Posterior vena cava (tissue), 2 donors: ENCODE measurements at regions of chr2 and their contacts with region 1.

Region 1: DNA sequence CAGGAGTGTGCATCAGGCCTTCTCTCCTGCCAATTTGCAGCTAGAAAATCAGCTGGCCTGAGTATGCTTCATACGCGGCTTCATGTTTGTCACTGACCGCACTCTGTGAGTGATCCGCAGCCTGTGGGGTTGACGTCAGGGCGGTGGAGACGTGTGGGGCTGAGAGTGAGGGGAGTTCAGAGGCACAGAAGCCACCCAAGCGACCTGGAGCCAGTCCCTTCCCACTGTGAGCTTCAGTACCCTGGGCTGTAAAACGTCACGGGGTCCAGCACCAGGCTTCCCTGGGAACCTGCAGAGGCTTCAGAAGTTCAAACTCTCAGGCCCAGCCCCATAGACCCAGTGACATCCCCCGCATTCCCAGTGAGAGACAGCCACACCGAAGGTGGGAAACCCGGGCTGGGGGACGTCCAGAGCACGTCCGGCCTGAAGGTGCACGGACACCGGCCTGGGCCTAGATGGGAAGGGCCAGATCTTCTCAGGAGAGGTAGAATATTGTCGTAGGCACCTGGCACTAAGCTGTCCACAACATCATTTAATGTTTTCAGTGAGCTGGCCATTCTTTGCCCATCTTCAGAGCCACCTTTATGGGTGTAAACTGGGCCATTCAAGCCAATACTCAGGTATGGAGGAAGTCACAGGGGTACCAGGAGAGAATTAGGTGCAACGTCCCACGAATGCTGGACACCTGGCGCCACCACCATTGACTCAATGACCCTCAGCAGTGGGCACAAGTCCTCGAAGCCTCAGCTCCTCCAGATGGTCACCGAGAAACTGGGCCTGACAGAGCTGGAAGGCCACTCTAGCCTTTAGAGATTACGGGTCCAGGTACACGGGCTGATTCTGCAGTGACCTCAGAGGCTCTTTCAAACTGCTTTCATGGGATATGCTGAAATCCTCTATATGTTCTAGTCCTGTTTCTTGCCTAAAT is 235.6 kb upstream of the MYT1L start:
- DNase-seq: peak; percentile 68

Region 2: DNA sequence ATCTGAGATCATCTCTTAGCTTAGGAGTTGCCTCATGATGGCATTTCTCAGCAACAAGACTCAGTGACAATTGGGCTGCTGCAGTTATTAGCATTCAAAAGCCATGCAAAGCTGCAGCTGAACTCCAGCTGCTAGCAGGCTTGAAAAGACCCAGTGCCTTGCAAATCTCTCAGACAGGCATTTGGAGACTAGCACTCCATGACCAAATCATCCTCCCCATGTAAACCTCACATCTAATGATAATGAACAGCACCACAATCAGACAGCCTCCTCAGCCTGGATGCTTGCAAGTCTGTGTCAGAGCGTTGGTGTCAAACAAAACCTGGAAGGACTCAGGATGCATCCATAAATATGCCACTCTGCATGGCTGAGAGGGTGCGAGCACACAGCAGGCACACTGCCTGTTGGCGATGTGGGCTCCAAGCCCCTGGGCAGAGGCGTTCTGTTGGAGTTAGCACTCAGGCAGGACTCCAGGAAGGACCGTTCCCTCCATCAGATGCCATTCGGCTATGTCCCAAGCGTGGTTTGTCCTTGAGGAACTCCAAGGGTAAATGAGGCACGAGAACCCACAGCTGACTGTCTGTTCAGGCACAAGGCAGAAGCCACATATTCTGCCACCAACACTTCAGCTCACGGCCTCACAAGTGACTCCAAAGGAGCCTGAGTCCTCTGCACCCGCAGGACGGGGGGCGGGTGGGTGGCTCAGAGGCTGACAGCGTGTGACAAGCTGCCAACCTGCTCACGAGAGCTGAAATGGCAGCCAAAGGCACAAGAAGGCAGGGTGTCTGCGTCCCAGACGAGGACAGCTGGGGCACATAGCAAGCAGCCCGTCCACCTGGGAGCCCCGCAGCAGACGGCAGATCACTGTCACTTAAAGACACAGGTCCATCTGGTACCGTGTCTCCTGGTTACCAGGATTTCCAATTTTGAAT is 419.4 kb before region 1 on chr2:
- intact Hi-C with region 1: no loop called
- DNase-seq: no peak

Region 3: DNA sequence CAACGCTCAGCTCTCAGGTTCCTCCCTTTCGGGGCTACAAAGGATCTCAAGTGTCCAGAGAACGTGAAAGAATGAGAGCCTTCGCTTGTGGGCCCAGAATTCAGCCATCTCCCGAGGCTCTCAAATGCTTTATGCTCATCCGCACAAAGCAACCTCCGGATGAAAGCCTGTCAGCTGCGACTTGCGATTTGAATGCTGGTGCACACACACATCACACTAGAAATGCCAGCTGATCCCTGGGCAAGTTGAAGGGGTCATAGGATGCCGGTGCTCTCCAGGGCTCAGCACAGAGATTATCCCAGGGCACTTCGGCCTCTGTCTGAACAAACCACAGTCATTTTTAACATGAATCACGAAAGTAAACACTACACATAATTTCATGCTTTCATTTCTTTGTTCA is 93.8 kb before region 1 on chr2:
- intact Hi-C with region 1: no loop called
- DNase-seq: no peak

Region 4: DNA sequence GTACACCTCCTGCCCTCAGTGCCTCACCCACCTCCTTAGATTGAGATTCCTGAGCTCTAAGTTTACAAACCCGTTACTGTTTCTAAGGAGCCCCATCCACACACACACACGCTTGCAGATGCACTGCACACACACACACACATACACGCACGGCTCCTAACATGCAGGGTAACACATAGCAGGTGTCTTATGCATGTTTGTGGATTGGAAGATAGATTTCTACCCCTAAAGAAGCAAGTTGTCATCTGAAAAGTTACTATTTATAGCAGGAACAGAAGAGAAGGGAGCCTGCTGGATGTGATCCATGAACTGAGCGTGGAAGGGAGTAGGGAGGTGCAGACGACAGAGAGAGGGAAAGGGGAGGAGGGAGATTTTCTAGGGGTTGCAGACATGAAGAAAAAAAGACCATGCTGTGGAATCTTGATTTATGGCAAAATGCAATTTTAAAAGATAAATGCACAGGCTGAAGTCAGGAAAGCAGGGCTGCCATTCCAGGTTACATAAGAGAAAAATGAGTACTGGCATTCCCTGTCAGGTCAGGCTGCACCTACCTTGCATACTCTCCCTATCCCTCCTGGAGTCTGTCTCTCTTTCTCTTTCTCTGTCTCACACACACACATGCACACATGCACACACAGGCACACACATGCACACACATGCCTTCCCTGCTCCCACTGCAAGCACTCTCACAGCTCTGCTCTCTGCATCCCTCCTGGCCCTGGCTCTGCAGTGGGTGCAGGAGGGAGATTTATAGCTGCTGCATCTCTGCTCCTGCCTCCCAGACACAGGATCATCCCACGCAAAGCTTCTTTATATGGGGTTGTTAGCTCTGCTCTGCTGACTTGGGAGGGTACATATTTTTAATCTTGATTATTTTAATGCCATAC is 43.0 kb before region 1 on chr2:
- intact Hi-C with region 1: loop called in 1 of 2 experiments (anchors 1 kb)
- DNase-seq: peak; percentile 18